ENCODE measurements at regions of chr7 and their contacts with region 1.

Region 1: DNA sequence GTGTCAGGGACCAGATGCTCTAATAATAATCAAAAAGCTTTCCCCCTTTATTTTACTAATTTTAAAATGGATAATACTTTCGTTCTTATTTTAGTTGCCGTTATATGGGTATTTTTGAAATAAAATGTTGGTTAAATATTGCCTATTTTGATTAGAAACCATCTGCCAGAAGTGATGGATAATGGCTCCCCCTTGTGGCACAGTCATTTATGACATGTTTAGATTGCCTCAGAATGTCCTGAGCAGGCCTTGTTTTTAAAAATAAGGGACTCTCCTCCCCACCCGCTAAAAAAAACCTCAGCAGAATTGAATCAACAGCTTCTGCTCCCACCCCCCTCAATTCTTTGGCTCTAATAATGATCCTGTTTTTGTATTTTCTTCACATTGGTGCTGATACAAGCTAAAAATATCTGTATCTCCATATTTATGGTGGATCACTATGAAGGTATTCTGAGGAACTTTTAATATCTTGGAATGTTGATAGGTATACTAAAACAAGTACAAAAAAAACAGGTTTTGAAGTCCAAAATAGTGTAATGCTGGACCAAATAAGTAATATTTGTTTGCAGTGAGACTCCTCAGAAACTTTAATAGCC is 38.8 kb downstream of the TMEM60 start:
- DNase-seq: no peak
- ATAC-seq: peak; percentile 64
- H3K4me3 Mint-ChIP-seq: no peak overlapping the region
- H3K27ac Mint-ChIP-seq: peak overlapping the region; percentile 50
- H3K4me1 Mint-ChIP-seq: peaks cover 52% of the 10 kb centered on the region
- H3K27me3 Mint-ChIP-seq: no peaks in the 10 kb centered on the region
- CTCF ChIP-seq: peak; percentile 22

Region 2: DNA sequence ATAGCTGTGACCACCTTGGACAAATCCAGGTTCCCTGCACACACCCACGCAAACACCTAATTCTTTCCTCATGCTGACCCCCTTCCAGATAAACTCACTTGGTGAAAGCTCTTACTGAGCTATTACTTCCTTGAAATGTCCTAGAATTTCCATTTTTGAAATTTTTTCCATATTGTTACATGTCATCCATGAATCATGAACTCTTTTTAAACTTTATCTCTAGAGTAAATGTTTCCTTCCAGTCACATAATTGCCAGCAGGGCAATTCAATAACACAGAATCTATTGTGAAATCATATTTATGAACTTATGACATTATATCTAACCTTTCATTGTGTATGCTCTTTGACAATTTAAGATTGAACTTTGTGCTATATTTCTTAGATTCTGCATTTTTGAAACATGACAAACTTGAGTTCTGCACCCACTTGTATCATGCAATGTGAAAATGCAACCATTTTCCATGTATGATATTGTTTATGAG is 533.0 kb before region 1 on chr7:
- CTCF ChIA-PET with region 1: no interaction called
- POLR2A ChIA-PET with region 1: no interaction called
- intact Hi-C with region 1: no loop called
- DNase-seq: no peak
- ATAC-seq: no peak
- H3K4me3 Mint-ChIP-seq: no peak overlapping the region
- H3K27ac Mint-ChIP-seq: no peak overlapping the region
- H3K4me1 Mint-ChIP-seq: no peaks in the 10 kb centered on the region
- H3K27me3 Mint-ChIP-seq: no peaks in the 10 kb centered on the region
- CTCF ChIP-seq: no peak

Region 3: GRCh38 chr7:77368974-77369373 is 390.4 kb before region 1 on chr7:
- CTCF ChIA-PET with region 1: interaction called, 3 read pairs
- POLR2A ChIA-PET with region 1: no interaction called
- intact Hi-C with region 1: loop called (anchors 10 kb)
- DNase-seq: no peak
- ATAC-seq: no peak
- H3K4me3 Mint-ChIP-seq: no peak overlapping the region
- H3K27ac Mint-ChIP-seq: no peak overlapping the region
- H3K4me1 Mint-ChIP-seq: peaks cover 2% of the 10 kb centered on the region
- H3K27me3 Mint-ChIP-seq: no peaks in the 10 kb centered on the region
- CTCF ChIP-seq: no peak

Measured in activated B cell treated with CpG ODN at 0.5 μM for 24 hours (primary cell).